Left cardiac atrium (tissue), 4 donors: ENCODE measurements at regions of chr4 and their contacts with region 1.

Region 1: GRCh38 chr4:51895813-51896408 is 53.0 kb downstream of the DCUN1D4 start:
- DNase-seq: peak; percentile 65
- ATAC-seq: peak; percentile 90 to 92

Region 2: GRCh38 chr4:52028969-52029368 is 133.1 kb after region 1 on chr4:
- intact Hi-C with region 1: loop called (anchors 5 to 10 kb)
- DNase-seq: no peak
- ATAC-seq: no peak

Region 3: GRCh38 chr4:52059372-52059771 is 163.5 kb after region 1 on chr4:
- intact Hi-C with region 1: no loop called
- DNase-seq: no peak
- ATAC-seq: peak; percentile 39 to 68